ENCODE measurements at regions of chr7 and their contacts with region 1.

Region 1: GRCh38 chr7:155598810-155599210 is 45.7 kb upstream of the RBM33 start:
- DNase-seq: peak; percentile 70 to 75
- ATAC-seq: peak; percentile 74 to 91
- H3K4me3 ChIP-seq: no peak overlapping the region
- H3K27ac ChIP-seq: peak overlapping the region; percentile 16 to 49; a peak in 2 of 6 replicates
- H3K4me1 ChIP-seq: peaks cover 27% of the 10 kb centered on the region
- CTCF ChIP-seq: peak; percentile 91
- EP300 ChIP-seq: no peak
- POLR2A ChIP-seq: no peak
- RAD21 ChIP-seq: peak; percentile 88 to 89

Region 2: DNA sequence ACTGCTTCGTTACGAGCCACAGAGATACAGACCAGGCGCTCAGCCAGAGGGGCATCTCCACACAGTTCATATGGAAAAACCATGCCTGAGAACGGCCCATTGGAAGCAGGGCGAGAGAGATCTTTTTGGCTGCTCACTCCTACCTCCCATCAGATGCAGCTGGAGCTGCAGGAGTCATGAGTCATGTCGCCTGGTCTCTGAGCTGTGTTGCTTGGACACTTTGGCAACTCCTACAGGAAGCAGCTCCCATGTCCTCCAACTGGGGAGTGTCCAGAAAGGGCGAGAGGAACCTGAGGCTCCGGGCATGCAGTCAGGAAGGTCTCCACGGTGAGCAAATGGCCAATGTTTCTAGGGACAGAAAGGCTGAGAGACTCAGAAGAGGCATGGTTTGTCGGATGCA is 276.3 kb before region 1 on chr7:
- CTCF ChIA-PET with region 1: no interaction called
- POLR2A ChIA-PET with region 1: no interaction called
- DNase-seq: peak in 1 of 2 experiments; percentile 17
- ATAC-seq: peak; percentile 62 to 69; a peak in 4 of 6 replicates
- H3K4me3 ChIP-seq: no peak overlapping the region
- H3K27ac ChIP-seq: no peak overlapping the region
- H3K4me1 ChIP-seq: 0 out of 3 replicates have a peak, but pooled peaks cover 5% of the 10 kb centered on the region
- CTCF ChIP-seq: no peak
- EP300 ChIP-seq: no peak
- POLR2A ChIP-seq: no peak
- RAD21 ChIP-seq: no peak

Region 3: GRCh38 chr7:155380221-155380861 is 218.5 kb before region 1 on chr7:
- CTCF ChIA-PET with region 1: interaction called, 13 read pairs
- POLR2A ChIA-PET with region 1: no interaction called
- DNase-seq: peak; percentile 77 to 93
- ATAC-seq: peak; percentile 83 to 93
- H3K4me3 ChIP-seq: no peak overlapping the region
- H3K27ac ChIP-seq: no peak overlapping the region
- H3K4me1 ChIP-seq: peaks cover 5% of the 10 kb centered on the region; the same call in 1 of the 3 replicates
- CTCF ChIP-seq: peak; percentile 68
- EP300 ChIP-seq: no peak
- POLR2A ChIP-seq: no peak
- RAD21 ChIP-seq: peak; percentile 66 to 70

Region 4: GRCh38 chr7:155555116-155555695 is 43.6 kb before region 1 on chr7:
- CTCF ChIA-PET with region 1: no interaction called
- POLR2A ChIA-PET with region 1: no interaction called
- DNase-seq: no peak
- ATAC-seq: no peak
- H3K4me3 ChIP-seq: no peak overlapping the region
- H3K27ac ChIP-seq: no peak overlapping the region
- H3K4me1 ChIP-seq: no peaks in the 10 kb centered on the region
- CTCF ChIP-seq: no peak
- EP300 ChIP-seq: no peak
- POLR2A ChIP-seq: no peak
- RAD21 ChIP-seq: no peak

Region 5: GRCh38 chr7:155618708-155619633 is 20.2 kb after region 1 on chr7:
- CTCF ChIA-PET with region 1: interaction called, 29 read pairs
- POLR2A ChIA-PET with region 1: interaction called, 5 read pairs
- DNase-seq: peak; percentile 66 to 93
- ATAC-seq: peak; percentile 95 to 98
- H3K4me3 ChIP-seq: peak overlapping the region; percentile 22; the same call in 2 of the 3 replicates
- H3K27ac ChIP-seq: peak overlapping the region; percentile 84 to 89
- H3K4me1 ChIP-seq: peaks cover 32% of the 10 kb centered on the region
- CTCF ChIP-seq: no peak
- EP300 ChIP-seq: no peak
- POLR2A ChIP-seq: peak; percentile 29
- RAD21 ChIP-seq: no peak; a peak in 2 of 5 replicates

Region 6: DNA sequence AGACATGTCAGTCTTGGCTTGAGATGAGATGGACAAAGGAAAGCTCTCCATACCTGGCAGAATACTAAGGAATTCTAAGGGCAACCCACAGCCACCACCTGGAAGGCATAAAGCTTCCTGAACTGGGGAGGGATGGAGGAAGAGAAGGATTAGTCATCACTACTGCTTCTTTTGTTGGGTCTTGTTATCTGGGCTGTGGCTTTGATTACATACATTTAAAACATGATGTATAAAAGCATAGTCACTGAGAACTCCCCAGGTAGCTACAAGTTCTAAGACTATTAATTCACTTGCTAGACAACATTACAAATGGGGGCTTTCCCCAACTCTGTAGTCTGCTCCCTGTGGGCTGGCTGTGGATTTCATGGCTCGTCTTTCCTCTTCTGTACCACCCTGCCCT is 103.8 kb after region 1 on chr7:
- CTCF ChIA-PET with region 1: interaction called, 18 read pairs
- POLR2A ChIA-PET with region 1: no interaction called
- DNase-seq: no peak
- ATAC-seq: no peak
- H3K4me3 ChIP-seq: no peak overlapping the region
- H3K27ac ChIP-seq: no peak overlapping the region
- H3K4me1 ChIP-seq: peaks cover 3% of the 10 kb centered on the region; the same call in 1 of the 3 replicates
- CTCF ChIP-seq: no peak
- EP300 ChIP-seq: no peak
- POLR2A ChIP-seq: no peak
- RAD21 ChIP-seq: no peak

Region 7: DNA sequence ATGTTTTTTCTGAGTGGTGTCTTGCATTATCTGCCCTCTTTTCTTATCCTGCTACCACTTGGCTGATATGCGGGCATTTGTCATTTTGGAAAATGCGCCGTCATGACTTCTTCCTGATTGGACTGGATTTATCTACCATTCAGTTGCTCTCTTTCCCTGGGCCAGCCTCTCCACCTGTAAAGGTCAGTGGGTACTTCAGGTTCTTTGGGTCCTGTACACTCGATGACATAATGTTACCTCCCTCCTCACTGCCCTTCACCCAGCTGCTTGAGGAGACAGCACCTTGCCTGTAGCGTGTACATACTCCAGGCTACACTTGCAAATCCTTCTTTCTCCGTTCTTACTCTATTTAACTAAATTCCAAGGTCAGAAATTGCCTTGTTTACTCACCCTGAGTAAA is 129.3 kb after region 1 on chr7:
- CTCF ChIA-PET with region 1: interaction called, 200 read pairs
- POLR2A ChIA-PET with region 1: no interaction called
- DNase-seq: no peak
- ATAC-seq: no peak
- H3K4me3 ChIP-seq: no peak overlapping the region
- H3K27ac ChIP-seq: no peak overlapping the region
- H3K4me1 ChIP-seq: peaks cover 25% of the 10 kb centered on the region
- CTCF ChIP-seq: no peak
- EP300 ChIP-seq: no peak
- POLR2A ChIP-seq: no peak
- RAD21 ChIP-seq: no peak

Region 8: DNA sequence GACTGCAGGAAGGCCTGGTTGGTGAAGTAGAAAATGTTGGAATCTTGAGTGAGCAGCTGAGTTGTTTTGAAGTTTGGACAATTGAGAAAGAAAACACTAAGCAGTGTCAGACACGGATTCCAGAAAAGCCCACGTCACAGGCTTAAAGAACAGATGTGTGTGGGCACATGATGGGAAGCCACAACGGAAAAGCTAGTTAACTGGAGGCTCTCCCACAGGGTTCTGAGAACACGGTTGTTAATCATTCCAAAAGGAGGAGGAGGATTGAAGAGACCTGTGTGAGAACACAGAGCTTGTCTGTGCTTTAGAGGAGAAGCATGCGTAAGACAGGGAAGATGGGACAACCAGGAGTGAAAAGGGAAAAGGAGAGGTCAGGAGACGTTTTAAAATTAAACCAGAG is 170.9 kb after region 1 on chr7:
- CTCF ChIA-PET with region 1: interaction called, 29 read pairs
- POLR2A ChIA-PET with region 1: no interaction called
- DNase-seq: no peak
- ATAC-seq: no peak
- H3K4me3 ChIP-seq: no peak overlapping the region
- H3K27ac ChIP-seq: no peak overlapping the region
- H3K4me1 ChIP-seq: no peaks in the 10 kb centered on the region
- CTCF ChIP-seq: no peak
- EP300 ChIP-seq: no peak
- POLR2A ChIP-seq: no peak
- RAD21 ChIP-seq: no peak